Activated CD4-positive, alpha-beta memory T cell treated with anti-CD3 and anti-CD28 coated beads for 36 hours (primary cell): ENCODE measurements at regions of chr5 and their contacts with region 1.

Region 1: DNA sequence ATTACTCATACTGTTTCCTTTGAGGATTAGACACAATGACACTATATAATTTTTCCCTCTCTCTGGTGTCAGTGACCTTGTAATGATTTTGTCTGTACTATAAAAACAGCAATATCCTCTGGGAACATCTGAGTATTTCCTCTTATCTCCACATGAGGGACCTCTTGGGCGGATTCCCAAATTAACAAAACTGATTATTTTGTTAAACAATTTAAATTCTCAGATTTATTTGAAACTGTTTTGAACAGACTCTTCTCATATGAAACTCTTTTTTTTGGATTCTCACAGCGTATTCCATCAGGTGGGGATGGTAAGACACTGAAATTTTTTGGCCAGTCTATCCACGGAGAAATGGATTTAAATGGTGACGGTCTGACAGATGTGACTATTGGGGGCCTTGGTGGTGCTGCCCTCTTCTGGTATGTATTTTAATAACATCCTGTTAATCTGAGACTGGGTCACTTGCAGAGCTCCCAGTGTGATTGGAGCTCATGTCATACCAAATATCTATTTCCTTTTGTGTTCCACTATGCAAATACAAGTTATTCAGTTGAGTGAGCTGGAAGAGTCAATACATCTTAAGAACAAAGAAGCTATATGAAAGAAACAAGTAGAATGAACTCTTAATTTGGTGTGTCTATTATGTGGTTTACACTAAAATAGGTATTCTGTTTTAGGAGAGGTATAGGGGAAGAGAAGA is 73.8 kb upstream of the ITGA2 start:
- DNase-seq: peak; percentile 52
- H3K4me3 Mint-ChIP-seq: peak overlapping the region; percentile 36
- H3K27ac Mint-ChIP-seq: no peak overlapping the region
- H3K4me1 Mint-ChIP-seq: peaks cover 6% of the 10 kb centered on the region
- H3K27me3 Mint-ChIP-seq: no peaks in the 10 kb centered on the region

Region 2: DNA sequence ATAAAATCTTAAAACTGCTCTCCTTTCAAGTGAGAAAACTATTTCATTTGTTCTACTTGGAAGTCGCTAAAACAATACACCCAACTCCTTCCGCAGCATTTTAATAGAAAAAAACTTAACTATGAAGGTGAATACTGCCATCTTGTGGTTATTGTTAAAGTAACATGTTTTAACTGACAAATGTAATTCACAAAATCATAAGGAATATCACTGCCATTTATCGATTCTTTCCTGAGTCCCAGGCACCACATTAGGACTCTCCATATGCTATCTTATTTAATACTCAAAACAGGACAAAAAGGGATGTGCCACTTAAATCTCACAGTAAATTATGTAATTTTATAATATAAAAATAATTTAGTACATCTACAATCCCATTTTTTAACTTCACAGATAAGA is 258.1 kb before region 1 on chr5:
- CTCF ChIA-PET with region 1: interaction called, 3 read pairs
- POLR2A ChIA-PET with region 1: no interaction called
- intact Hi-C with region 1: loop called (anchors 10 kb)
- DNase-seq: no peak
- H3K4me3 Mint-ChIP-seq: no peak overlapping the region
- H3K27ac Mint-ChIP-seq: no peak overlapping the region
- H3K4me1 Mint-ChIP-seq: no peaks in the 10 kb centered on the region
- H3K27me3 Mint-ChIP-seq: peaks cover 6% of the 10 kb centered on the region

Region 3: DNA sequence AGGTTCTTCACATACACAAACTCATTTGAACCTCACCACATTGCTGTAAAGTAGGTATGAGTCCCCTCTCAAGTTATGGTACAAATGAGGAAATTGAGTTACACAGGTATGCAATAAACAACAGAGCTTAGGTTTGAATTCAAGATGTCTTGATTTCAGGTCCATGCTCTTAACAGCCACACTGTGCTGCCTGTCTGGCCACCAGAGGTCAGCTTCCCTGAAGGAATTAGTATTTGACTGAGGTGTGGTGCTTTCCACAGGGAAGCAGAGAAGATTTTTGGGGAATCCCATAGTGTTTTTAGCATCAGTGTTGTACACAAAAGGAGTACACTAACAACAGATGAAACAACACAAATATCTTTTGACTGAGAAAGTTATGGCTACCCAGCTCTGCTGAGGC is 222.0 kb before region 1 on chr5:
- CTCF ChIA-PET with region 1: interaction called, 16 read pairs
- POLR2A ChIA-PET with region 1: no interaction called
- intact Hi-C with region 1: loop called (anchors 1 kb)
- DNase-seq: peak; percentile 35
- H3K4me3 Mint-ChIP-seq: no peak overlapping the region
- H3K27ac Mint-ChIP-seq: no peak overlapping the region
- H3K4me1 Mint-ChIP-seq: no peaks in the 10 kb centered on the region
- H3K27me3 Mint-ChIP-seq: no peaks in the 10 kb centered on the region

Region 4: GRCh38 chr5:52928689-52929088 is 13.4 kb after region 1 on chr5:
- CTCF ChIA-PET with region 1: no interaction called
- POLR2A ChIA-PET with region 1: no interaction called
- intact Hi-C with region 1: no loop called
- DNase-seq: no peak
- H3K4me3 Mint-ChIP-seq: no peak overlapping the region
- H3K27ac Mint-ChIP-seq: no peak overlapping the region
- H3K4me1 Mint-ChIP-seq: peaks cover 3% of the 10 kb centered on the region
- H3K27me3 Mint-ChIP-seq: peaks cover 8% of the 10 kb centered on the region

Region 5: GRCh38 chr5:52961274-52961681 is 46.0 kb after region 1 on chr5:
- CTCF ChIA-PET with region 1: no interaction called
- POLR2A ChIA-PET with region 1: no interaction called
- intact Hi-C with region 1: no loop called
- DNase-seq: no peak
- H3K4me3 Mint-ChIP-seq: no peak overlapping the region
- H3K27ac Mint-ChIP-seq: no peak overlapping the region
- H3K4me1 Mint-ChIP-seq: no peaks in the 10 kb centered on the region
- H3K27me3 Mint-ChIP-seq: peaks cover 3% of the 10 kb centered on the region

Region 6: DNA sequence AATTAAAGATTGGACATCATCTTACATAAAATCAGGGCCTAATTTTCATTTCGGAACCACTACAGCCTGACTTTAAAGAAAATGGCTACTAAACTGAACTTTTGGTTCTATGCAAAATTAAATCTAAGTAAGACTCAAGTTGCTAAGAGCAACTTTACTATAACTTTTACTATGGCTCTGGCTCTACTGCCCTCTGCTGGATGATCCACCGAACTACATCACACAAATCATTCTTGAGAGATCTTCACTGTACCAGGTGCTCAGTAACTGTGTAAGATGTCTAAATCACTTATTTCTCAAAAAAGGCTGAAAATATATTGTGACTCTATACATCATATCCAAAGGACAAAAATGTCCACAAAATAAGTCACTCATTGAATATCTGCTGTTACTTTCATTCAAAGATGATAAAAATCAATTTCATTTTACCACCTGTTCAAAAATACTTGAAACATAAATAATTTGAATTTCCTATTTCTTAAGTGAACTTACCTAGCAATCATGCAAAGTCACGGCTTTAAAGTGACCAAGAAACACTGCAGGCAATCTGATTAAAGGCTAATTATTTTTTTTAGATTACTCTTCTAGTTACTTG is 180.7 kb after region 1 on chr5:
- CTCF ChIA-PET with region 1: interaction called, 6 read pairs
- POLR2A ChIA-PET with region 1: no interaction called
- intact Hi-C with region 1: loop called (anchors 1 kb)
- DNase-seq: peak; percentile 78
- H3K4me3 Mint-ChIP-seq: no peak overlapping the region
- H3K27ac Mint-ChIP-seq: no peak overlapping the region
- H3K4me1 Mint-ChIP-seq: no peaks in the 10 kb centered on the region
- H3K27me3 Mint-ChIP-seq: no peaks in the 10 kb centered on the region